ENCODE measurements at regions of chr3 and their contacts with region 1.

Region 1: GRCh38 chr3:114418724-114419543 is 125.1 kb downstream of the TIGIT start:
- DNase-seq: no peak
- ATAC-seq: peak; percentile 82 to 85

Region 2: GRCh38 chr3:114351123-114351821 is 67.7 kb before region 1 on chr3:
- intact Hi-C with region 1: no loop called
- DNase-seq: no peak
- ATAC-seq: peak; percentile 27 to 29

Region 3: DNA sequence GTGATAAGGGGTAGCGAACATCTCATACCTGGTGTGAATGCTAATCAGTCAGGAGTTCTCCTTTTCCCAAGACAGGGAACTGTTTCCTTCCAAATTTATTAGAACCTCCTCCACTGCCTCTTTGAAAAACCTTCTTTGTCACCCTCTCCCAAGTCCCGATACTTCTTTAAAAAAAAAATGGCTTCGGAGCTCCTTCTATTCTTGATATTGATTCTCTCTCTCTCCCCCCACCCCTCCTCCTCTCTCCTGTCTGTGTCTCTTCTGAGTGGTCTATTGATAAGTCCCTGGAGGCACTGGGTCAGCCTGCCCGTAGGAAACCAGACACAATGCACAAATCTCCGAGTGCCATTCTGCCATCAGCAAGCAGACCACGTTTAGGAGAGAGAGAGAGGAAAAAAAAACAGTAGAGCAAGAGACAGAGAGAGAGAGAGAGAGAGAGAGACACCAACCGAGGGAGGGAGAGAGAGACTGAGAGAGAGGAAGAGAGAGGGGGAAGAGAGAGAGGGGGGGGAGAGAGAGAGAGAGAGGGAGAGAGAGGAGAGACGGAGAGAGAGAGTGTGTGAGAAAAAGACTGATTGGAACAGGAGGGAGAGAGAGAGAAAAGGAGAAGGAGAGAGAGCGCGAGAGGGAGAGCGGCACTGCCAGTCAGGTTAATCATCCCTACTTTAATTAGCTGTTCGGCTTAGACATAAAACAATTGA is 35.8 kb after region 1 on chr3:
- intact Hi-C with region 1: loop called in 1 of 2 experiments (anchors 5 kb)
- DNase-seq: no peak
- ATAC-seq: peak; percentile 50 to 58